Activated CD4-positive, alpha-beta memory T cell treated with anti-CD3 and anti-CD28 coated beads for 36 hours (primary cell): ENCODE measurements at regions of chr14 and their contacts with region 1.

Region 1: GRCh38 chr14:22766456-22767322 is at the start of gene OXA1L:
- DNase-seq: peak; percentile 98
- H3K4me3 Mint-ChIP-seq: peak within 1 kb of the TSS; percentile 94
- H3K27ac Mint-ChIP-seq: peak within 1 kb of the TSS; percentile 98
- H3K4me1 Mint-ChIP-seq: peaks cover 34% of the 10 kb centered on the region
- H3K27me3 Mint-ChIP-seq: peaks cover 2% of the 10 kb centered on the region
- total RNA-seq, gene OXA1L: 131 to 136 TPM

Region 2: DNA sequence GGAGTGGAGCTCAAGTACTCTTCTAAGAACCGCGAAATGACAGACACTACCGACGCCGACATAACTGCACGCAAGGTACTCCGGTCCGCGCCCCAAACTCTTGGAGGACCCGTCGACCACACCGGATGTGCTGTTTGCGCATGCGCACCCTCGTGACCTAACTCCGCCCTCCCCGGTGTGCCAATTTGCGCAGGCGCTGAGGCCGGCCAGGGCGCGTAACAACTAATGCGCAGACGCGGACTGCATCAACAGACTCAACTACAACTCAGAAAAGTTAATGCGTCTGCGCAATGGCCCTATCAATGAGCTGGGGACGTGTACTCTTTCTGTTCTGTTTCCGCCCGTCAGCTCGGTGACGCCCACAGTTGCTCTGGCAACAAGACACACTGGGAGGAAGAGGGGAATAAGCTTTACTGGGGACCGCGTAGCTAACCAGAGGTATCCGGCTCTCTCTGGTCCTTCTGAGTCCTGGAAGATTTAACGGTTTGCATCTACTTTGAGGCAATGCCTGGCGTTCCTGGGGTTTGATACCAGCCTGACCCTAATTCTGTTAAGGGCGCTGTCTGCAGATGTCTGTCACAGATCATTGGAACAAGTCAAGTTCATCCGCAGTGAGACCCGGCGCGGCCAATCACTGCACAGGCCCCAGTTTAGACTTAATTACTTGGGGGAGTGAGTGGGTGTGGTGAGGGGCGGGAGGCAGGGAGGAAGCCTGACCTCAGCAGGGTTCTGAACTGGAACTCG is 177.4 kb before region 1 on chr14 and contains the start of gene DAD1:
- CTCF ChIA-PET with region 1: interaction called, 9 read pairs
- POLR2A ChIA-PET with region 1: interaction called, 17 read pairs
- intact Hi-C with region 1: loop called (anchors 1 kb)
- DNase-seq: peak; percentile 100
- H3K4me3 Mint-ChIP-seq: peak within 1 kb of the TSS; percentile 99
- H3K27ac Mint-ChIP-seq: peak within 1 kb of the TSS; percentile 100
- H3K4me1 Mint-ChIP-seq: peaks cover 64% of the 10 kb centered on the region
- H3K27me3 Mint-ChIP-seq: peaks cover 5% of the 10 kb centered on the region
- total RNA-seq, gene DAD1: 292 to 305 TPM

Region 3: DNA sequence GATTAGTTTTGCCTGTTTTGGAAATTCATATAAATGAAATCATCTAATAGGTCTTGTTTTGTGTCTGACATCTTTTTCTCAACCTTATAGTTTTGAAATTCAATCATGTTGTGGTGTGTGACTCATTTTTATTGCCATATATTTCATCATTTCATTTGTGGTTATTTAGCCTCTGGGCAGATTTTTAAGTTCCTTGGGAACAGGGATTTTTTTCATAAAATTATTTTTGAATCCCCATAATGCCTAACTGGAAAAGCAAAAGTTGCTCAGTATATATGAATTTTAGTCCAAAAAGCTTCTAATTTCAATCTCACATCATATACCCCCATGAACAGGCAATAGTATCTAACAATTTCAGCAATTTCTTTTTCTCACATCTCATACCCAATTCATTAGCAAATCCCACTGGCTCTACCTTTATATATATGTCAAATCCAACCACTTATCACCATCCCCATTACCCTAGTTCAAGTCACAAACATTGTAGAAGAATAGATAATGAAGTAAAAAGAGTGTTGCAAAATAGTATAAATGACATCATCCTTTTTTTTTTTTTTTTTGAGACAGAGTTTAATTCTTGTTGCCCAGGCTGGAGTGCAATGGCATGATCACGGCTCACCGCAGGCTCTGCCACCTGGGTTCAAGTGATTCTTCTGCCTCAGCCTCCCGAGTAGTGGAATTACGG is 120.0 kb before region 1 on chr14:
- CTCF ChIA-PET with region 1: no interaction called
- POLR2A ChIA-PET with region 1: no interaction called
- intact Hi-C with region 1: loop called (anchors 5 kb)
- DNase-seq: no peak
- H3K4me3 Mint-ChIP-seq: no peak overlapping the region
- H3K27ac Mint-ChIP-seq: no peak overlapping the region
- H3K4me1 Mint-ChIP-seq: peaks cover 5% of the 10 kb centered on the region
- H3K27me3 Mint-ChIP-seq: no peaks in the 10 kb centered on the region

Region 4: GRCh38 chr14:22689186-22689585 is 77.5 kb before region 1 on chr14:
- CTCF ChIA-PET with region 1: no interaction called
- POLR2A ChIA-PET with region 1: no interaction called
- intact Hi-C with region 1: no loop called
- DNase-seq: peak; percentile 48
- H3K4me3 Mint-ChIP-seq: no peak overlapping the region
- H3K27ac Mint-ChIP-seq: no peak overlapping the region
- H3K4me1 Mint-ChIP-seq: peaks cover 8% of the 10 kb centered on the region
- H3K27me3 Mint-ChIP-seq: peaks cover 41% of the 10 kb centered on the region

Region 5: DNA sequence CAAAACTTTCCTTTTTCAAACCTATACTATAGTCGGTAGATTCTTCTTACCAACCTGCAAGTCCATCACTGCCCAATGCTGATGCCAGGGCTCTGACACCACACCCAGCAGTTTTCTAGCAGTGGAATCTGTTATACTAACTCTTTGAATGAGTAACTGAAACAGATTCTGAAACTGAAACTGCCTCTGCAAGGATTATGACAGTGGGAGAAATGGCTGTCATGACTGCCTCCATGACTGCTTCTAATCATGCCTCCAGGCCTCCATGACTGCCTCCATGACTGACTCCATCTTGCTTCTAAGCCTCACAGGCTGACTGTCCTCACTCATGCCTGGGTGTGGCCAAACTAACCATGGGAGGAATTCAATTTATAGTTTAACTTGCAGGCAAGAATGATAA is 29.6 kb before region 1 on chr14:
- CTCF ChIA-PET with region 1: no interaction called
- POLR2A ChIA-PET with region 1: no interaction called
- intact Hi-C with region 1: loop called (anchors 1 kb)
- DNase-seq: peak; percentile 76
- H3K4me3 Mint-ChIP-seq: no peak overlapping the region
- H3K27ac Mint-ChIP-seq: peak overlapping the region; percentile 63
- H3K4me1 Mint-ChIP-seq: peaks cover 16% of the 10 kb centered on the region
- H3K27me3 Mint-ChIP-seq: no peaks in the 10 kb centered on the region

Region 6: DNA sequence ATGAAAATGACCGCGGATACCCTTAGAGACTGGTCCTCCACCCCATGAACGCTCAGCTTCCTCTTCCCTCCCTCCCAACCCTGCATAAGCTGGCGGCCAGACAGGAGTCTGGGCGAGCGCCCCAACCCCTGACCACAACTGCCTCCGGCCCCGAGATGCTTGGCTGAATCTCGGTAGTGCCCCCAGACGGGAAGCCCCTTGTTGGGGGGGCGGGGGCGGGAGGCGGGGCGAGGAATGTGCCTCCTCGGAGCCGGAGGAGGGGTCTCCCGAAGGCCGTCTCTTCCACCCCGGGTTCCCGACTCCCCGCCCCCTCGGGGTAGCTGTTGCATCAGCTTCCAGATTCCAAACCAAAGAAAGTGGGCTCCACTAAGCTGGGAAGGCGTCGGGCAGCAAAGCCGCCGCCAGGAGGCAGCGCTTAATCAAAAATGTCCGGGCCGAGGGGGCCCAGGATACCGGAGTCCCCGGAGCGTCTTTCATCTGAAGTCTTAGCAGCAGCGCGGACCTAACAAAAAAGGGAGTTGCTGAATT is 55.9 kb after region 1 on chr14:
- CTCF ChIA-PET with region 1: interaction called, 11 read pairs
- POLR2A ChIA-PET with region 1: interaction called, 3 read pairs
- intact Hi-C with region 1: no loop called
- DNase-seq: peak; percentile 77
- H3K4me3 Mint-ChIP-seq: peak overlapping the region; percentile 63
- H3K27ac Mint-ChIP-seq: no peak overlapping the region
- H3K4me1 Mint-ChIP-seq: peaks cover 26% of the 10 kb centered on the region
- H3K27me3 Mint-ChIP-seq: peaks cover 12% of the 10 kb centered on the region

Region 7: DNA sequence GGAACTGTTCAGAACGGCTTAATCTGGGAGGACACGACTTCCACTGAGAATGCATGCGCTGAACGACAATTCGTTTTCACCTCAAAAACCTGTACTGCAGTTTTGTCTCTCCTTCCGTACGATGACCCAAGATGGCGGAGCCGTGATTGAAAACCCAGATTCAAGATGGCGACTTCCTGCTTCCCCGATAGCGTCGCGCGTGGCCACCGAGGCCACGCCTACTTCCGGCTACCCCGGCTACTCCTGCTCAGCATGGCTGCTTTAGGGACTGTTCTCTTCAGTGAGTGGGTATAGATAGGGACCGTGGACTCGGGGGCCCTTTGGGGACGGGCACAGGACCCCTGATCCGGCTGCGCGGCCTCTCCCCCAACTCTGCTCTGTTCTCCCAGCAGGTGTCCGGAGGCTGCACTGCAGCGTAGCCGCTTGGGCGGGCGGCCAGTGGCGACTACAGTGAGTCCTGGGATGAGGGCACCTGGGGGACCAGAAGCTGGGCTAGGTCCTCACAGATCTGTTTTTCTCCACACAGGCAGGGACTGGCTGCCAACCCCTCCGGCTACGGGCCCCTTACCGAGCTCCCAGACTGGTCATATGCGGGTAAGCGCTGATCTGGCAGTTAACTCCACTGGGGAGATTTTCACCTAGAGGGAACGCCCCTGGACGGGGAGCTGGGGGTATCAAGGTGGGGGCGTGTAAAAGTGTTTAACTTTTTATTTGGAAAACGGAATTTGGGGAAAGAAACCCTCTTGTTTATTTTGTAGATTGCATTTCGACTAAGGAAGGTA is 63.2 kb after region 1 on chr14 and contains the start of gene MRPL52:
- CTCF ChIA-PET with region 1: interaction called, 5 read pairs
- POLR2A ChIA-PET with region 1: interaction called, 15 read pairs
- intact Hi-C with region 1: loop called (anchors 1 kb)
- DNase-seq: peak; percentile 94
- H3K4me3 Mint-ChIP-seq: peak within 1 kb of the TSS; percentile 95
- H3K27ac Mint-ChIP-seq: peak within 1 kb of the TSS; percentile 95
- H3K4me1 Mint-ChIP-seq: peaks cover 26% of the 10 kb centered on the region
- H3K27me3 Mint-ChIP-seq: peaks cover 2% of the 10 kb centered on the region
- total RNA-seq, gene MRPL52: 152 to 156 TPM

Region 8: DNA sequence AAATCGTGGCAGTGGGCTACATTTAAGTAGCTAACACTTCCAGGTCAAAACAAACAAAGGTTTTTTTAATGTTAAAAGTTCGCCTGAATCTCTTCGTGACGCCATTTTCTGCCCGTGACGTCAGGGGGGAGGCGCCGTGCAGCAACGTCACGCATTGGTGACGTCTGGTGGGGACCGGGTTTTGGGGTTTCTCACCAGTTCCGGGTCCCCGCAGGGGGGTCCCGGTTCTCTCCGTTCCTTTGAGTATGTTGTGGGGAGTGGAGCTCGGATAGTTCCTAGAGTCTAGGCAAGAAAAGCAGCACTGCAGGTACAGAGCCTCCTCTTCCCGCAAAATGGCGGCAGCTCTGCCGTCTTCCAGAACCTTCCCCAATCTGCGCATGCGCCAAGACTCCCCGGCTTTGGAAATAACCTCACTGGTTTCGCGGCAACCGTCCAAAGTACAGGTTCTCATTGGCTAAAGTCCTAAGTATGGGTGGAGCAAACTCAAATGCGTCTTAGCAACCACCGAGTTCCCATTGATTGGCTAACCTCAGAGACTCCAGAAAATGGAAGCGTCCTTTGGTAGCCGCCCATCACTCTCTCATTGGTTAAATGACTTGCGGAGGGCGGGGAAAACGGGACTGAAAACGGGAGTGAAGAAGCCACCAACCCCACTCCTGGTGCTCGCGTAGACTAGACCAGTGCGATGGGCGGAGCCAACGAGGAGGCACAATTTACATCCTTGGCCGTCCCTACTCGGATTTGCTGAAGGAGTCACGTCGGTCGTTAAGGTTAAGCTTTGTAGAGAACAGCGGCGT is 152.3 kb after region 1 on chr14 and contains the start of gene RBM23:
- CTCF ChIA-PET with region 1: no interaction called
- POLR2A ChIA-PET with region 1: interaction called, 6 read pairs
- intact Hi-C with region 1: loop called (anchors 2 kb)
- DNase-seq: peak; percentile 100
- H3K4me3 Mint-ChIP-seq: peak within 1 kb of the TSS; percentile 84
- H3K27ac Mint-ChIP-seq: peak within 1 kb of the TSS; percentile 99
- H3K4me1 Mint-ChIP-seq: peaks cover 35% of the 10 kb centered on the region
- H3K27me3 Mint-ChIP-seq: no peaks in the 10 kb centered on the region
- total RNA-seq, gene RBM23: 55.0 to 56.0 TPM